A673 (cell line): ENCODE measurements at regions of chr2 and their contacts with region 1.

Region 1: DNA sequence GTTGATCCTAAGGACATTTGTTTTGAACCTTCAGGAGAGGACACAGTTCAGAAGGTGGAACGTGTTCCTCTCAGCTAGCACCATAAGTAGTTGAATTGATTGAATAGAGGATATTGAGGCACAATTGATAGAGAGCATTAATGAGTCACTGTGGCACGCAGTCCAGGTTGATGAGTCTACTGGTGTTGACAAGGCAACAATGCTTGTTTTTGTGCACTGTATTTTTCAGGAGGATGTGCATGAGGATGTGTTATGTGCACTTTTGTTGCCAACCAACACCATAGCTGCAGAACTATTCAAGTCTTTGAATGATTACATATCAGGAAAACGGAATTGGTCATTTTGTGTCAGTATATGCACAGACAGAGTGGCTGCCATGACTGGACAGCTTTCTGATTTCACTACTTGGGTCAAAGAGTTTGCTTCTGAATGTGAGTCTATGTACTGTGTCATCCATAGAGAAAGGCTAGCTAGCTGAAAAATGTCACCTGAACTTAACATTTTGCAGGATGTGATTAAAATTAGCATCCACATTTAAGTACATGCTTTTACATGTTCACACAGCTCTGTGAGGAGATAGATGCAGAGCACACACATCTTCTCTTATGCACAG is 140.1 kb upstream of the B3GNT2 start:
- DNase-seq: no peak
- H3K4me3 ChIP-seq: no peak overlapping the region
- H3K27ac ChIP-seq: no peak overlapping the region
- H3K4me1 ChIP-seq: no peaks in the 10 kb centered on the region
- H3K27me3 ChIP-seq: no peaks in the 10 kb centered on the region
- CTCF ChIP-seq: no peak

Region 2: GRCh38 chr2:60960706-60961105 is 1095.1 kb before region 1 on chr2:
- CTCF ChIA-PET with region 1: no interaction called
- POLR2A ChIA-PET with region 1: interaction called, 24 read pairs
- intact Hi-C with region 1: no loop called
- DNase-seq: no peak
- H3K4me3 ChIP-seq: no peak overlapping the region
- H3K27ac ChIP-seq: no peak overlapping the region
- H3K4me1 ChIP-seq: no peaks in the 10 kb centered on the region
- H3K27me3 ChIP-seq: no peaks in the 10 kb centered on the region
- CTCF ChIP-seq: no peak

Region 3: DNA sequence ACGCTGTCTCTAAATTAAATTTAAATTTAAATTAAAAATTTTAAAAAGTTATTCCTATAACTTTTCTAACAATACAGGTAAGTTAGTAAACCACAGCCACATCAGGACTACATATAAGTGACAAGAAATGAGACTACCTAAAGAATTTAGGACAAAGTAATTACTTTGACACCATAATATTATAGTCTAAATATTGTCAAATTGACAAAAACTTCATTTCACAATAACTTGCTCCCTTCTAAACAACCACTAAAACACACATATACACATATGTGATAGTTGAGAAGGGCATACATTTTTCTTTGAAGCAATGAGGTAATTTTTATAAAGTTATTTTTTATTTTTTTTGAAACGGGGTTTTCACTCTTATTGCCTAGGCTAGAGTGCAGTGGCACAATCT is 233.6 kb before region 1 on chr2:
- CTCF ChIA-PET with region 1: no interaction called
- POLR2A ChIA-PET with region 1: no interaction called
- intact Hi-C with region 1: no loop called
- DNase-seq: no peak
- H3K4me3 ChIP-seq: no peak overlapping the region
- H3K27ac ChIP-seq: no peak overlapping the region
- H3K4me1 ChIP-seq: no peaks in the 10 kb centered on the region
- H3K27me3 ChIP-seq: no peaks in the 10 kb centered on the region
- CTCF ChIP-seq: no peak